PC-3 (cell line): ENCODE measurements at regions of chr9 and their contacts with region 1.

Region 1: DNA sequence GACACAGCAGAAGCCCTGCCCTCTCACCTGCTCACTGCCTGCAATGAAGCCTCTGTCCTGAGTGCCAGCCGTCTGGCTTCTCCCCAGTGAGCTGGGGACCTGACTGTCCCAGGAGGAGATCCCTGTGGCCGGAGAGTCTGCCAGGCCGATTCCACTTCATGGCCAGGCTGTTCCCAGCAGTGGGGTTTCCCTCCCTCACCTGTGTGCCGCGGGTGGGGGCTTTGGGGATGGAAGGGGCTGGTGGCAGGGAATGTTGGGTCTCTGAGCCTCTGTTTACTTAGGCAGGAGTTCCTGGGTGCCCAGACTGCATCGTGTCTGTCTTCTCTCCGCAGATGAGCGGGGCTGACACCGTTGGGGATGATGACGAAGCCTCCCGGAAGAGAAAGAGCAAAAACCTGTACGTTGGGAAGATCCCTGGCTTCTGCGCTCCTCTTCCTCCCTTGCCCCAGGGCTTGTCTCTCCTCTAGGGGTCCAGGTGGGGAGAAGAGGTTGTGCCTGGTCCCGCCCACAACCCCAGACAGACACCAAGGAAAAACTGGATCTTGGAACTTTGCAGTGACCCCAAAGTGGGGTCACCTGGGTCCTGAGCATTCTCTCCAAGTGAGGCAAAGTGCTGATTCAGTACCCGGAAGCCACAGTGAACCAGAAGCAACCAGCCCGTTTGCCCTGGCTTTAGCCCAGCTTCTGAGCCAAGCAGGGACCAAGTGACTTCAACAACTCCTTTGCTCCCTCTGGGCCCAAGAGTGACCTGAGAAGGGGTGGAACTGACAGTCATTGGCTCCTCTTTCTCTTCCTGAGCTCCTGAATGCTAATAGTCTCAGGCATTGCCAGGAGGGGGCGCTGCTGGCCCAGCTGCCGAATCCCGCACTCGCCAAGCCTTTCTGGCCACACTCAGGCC is 127.7 kb downstream of the RGS3 start:
- DNase-seq: peak; percentile 66
- ATAC-seq: peak; percentile 66
- H3K4me3 ChIP-seq: no peak overlapping the region
- H3K27ac ChIP-seq: no peak overlapping the region
- H3K4me1 ChIP-seq: no peaks in the 10 kb centered on the region
- H3K27me3 ChIP-seq: no peaks in the 10 kb centered on the region
- CTCF ChIP-seq: peak; percentile 83

Region 2: GRCh38 chr9:113446323-113446740 is 144.9 kb before region 1 on chr9:
- CTCF ChIA-PET with region 1: interaction called, 18 read pairs
- POLR2A ChIA-PET with region 1: no interaction called
- intact Hi-C with region 1: loop called (anchors 2 kb)
- DNase-seq: peak; percentile 67
- ATAC-seq: no peak
- H3K4me3 ChIP-seq: no peak overlapping the region
- H3K27ac ChIP-seq: no peak overlapping the region
- H3K4me1 ChIP-seq: no peaks in the 10 kb centered on the region
- H3K27me3 ChIP-seq: no peaks in the 10 kb centered on the region
- CTCF ChIP-seq: peak; percentile 70